ENCODE measurements at regions of chr10 and their contacts with region 1.

Region 1: DNA sequence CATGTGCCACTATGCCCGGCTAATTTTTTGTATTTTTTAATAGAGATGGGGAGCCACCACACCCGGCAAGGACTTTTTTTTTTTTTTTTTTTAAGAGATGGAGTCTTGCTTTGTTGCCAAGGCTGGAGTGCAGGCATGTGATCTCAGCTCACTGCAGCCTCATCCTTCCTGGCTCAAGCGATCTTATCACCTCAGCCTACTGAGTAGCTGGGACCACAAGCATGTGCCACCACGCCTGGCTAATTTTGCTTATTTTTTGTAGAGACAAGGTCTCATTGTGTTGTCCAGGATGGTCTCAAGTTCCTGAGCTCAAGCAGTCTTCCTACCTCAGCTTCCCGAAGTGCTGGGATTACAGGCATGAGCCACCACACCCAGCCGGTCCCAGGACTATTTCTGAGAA is 9.3 kb upstream of the MCU start:
- DNase-seq: peak; percentile 36
- H3K4me3 Mint-ChIP-seq: no peak overlapping the region
- H3K27ac Mint-ChIP-seq: no peak overlapping the region
- H3K4me1 Mint-ChIP-seq: peaks cover 59% of the 10 kb centered on the region
- H3K27me3 Mint-ChIP-seq: no peaks in the 10 kb centered on the region
- CTCF ChIP-seq: no peak

Region 2: DNA sequence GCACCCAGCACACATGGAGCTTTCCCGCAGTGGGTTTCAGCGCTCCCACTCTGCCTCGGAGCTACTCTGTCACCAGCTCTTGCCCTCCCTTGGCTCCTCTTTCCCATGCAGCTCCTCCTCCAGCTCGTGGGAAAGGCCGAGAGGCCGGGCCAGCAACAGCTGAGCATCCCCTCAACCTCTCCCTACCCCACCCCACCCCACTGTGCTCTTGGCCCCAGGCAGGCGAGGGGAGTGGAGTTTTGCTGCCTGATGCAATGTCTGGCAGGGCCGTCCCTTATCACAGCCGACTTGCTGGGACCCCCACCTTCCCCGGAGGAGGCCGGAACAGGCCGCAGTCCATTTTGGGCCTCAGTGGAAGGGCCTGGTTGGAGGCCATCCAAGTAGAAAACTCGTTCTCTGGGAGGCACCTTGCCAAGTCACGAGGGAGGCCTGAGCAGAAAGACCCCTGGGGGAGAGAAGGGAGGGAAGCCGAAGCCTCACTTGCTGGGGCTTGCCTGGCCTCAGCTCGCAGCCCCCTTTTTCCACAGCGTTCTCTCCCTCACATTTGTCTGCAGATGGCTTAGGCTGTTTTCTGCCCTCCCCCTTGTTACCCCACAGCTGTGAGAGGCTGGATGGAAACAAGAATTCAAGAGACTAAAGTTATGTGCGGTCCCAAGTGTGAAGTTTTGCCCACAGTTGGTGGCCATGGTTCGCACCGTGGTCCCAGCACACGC is 683.1 kb before region 1 on chr10:
- CTCF ChIA-PET with region 1: interaction called, 10 read pairs
- intact Hi-C with region 1: no loop called
- DNase-seq: no peak
- H3K4me3 Mint-ChIP-seq: peak overlapping the region; percentile 31
- H3K27ac Mint-ChIP-seq: peak overlapping the region; percentile 53
- H3K4me1 Mint-ChIP-seq: peaks cover 52% of the 10 kb centered on the region
- H3K27me3 Mint-ChIP-seq: no peaks in the 10 kb centered on the region
- CTCF ChIP-seq: no peak

Region 3: GRCh38 chr10:72574636-72575035 is 108.0 kb before region 1 on chr10:
- CTCF ChIA-PET with region 1: no interaction called
- intact Hi-C with region 1: no loop called
- DNase-seq: no peak
- H3K4me3 Mint-ChIP-seq: no peak overlapping the region
- H3K27ac Mint-ChIP-seq: no peak overlapping the region
- H3K4me1 Mint-ChIP-seq: peaks cover 13% of the 10 kb centered on the region
- H3K27me3 Mint-ChIP-seq: no peaks in the 10 kb centered on the region
- CTCF ChIP-seq: no peak

Region 4: GRCh38 chr10:72625608-72626443 is 56.8 kb before region 1 on chr10 and contains the start of gene MICU1:
- CTCF ChIA-PET with region 1: interaction called, 11 read pairs
- intact Hi-C with region 1: no loop called
- DNase-seq: peak; percentile 98
- H3K4me3 Mint-ChIP-seq: peak within 1 kb of the TSS; percentile 92
- H3K27ac Mint-ChIP-seq: peak within 1 kb of the TSS; percentile 87
- H3K4me1 Mint-ChIP-seq: peaks cover 17% of the 10 kb centered on the region
- H3K27me3 Mint-ChIP-seq: no peaks in the 10 kb centered on the region
- CTCF ChIP-seq: no peak
- total RNA-seq, gene MICU1: 89.1 and 89.4 TPM in 2 replicates

Region 5: DNA sequence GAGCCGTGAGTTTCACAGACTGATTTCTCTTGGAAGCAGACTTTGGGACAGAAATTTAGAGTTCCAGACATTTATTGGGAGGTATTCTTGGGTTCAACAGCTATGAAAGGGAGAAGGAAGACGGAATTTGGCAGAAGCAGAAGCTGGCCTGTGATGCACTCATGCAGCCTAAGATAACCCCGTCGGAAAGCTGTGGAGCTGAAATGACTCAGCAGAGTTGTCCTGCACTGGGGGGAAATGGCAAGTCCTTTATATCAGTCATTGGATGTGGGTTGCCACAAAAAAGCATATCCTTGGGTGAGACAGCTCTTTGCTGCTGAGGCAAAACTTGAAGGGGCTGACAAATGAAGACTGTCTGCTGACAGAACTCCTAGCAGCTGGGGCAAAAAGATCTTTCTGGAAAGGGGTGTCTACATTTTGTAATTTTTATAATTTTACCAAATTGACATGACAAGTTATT is 45.2 kb before region 1 on chr10:
- CTCF ChIA-PET with region 1: interaction called, 4 read pairs
- intact Hi-C with region 1: loop called (anchors 1 kb)
- DNase-seq: peak; percentile 16
- H3K4me3 Mint-ChIP-seq: no peak overlapping the region
- H3K27ac Mint-ChIP-seq: peak overlapping the region; percentile 60
- H3K4me1 Mint-ChIP-seq: peaks cover 37% of the 10 kb centered on the region
- H3K27me3 Mint-ChIP-seq: no peaks in the 10 kb centered on the region
- CTCF ChIP-seq: no peak